H1 (cell line): ENCODE measurements at regions of chr7 and their contacts with region 1.

Region 1: GRCh38 chr7:22474645-22475044 is 25.3 kb downstream of the STEAP1B start:
- DNase-seq: no peak
- H3K4me3 ChIP-seq: no peak overlapping the region
- H3K27ac ChIP-seq: no peak overlapping the region
- H3K4me1 ChIP-seq: no peaks in the 10 kb centered on the region
- H3K27me3 ChIP-seq: no peaks in the 10 kb centered on the region
- CTCF ChIP-seq: no peak
- EP300 ChIP-seq: no peak
- POLR2A ChIP-seq: no peak
- RAD21 ChIP-seq: no peak

Region 2: DNA sequence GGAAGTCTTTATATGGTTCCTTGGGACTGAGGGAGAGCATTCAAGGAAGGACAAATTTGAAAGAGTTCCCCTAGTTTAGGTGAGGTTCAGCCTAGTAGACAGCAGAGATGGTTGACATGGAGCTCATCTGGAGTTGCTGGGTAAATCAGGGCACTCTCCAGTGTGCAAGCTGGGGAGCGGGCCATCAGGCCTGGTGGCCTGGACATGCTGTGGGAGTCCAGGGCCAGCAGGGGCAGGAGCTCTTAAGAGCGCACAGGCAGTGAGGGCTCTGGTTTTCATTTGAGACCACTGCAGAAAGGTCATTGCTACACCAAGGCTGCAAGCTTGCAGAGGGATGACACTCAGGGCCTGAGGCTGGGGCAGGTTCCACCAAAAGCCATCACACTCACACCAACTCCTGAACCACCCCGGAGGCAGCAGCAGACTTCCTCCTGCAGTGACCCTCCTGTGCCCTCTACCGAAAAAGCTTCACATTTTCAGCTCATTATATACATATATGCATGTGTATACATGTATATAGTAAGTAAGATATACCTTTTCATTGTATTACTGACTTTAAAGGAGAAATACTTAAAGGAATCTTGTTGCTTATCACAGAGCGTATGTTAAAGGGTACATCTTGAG is 14.2 kb before region 1 on chr7:
- CTCF ChIA-PET with region 1: interaction called, 10 read pairs
- POLR2A ChIA-PET with region 1: no interaction called
- DNase-seq: no peak
- H3K4me3 ChIP-seq: no peak overlapping the region
- H3K27ac ChIP-seq: no peak overlapping the region
- H3K4me1 ChIP-seq: no peaks in the 10 kb centered on the region
- H3K27me3 ChIP-seq: no peaks in the 10 kb centered on the region
- CTCF ChIP-seq: no peak
- EP300 ChIP-seq: no peak
- POLR2A ChIP-seq: no peak
- RAD21 ChIP-seq: peak in 1 of 2 experiments; percentile 9; a peak in 1 of 4 replicates